Naive thymus-derived CD4-positive, alpha-beta T cell (primary cell): ENCODE measurements at regions of chr1 and their contacts with region 1.

Region 1: DNA sequence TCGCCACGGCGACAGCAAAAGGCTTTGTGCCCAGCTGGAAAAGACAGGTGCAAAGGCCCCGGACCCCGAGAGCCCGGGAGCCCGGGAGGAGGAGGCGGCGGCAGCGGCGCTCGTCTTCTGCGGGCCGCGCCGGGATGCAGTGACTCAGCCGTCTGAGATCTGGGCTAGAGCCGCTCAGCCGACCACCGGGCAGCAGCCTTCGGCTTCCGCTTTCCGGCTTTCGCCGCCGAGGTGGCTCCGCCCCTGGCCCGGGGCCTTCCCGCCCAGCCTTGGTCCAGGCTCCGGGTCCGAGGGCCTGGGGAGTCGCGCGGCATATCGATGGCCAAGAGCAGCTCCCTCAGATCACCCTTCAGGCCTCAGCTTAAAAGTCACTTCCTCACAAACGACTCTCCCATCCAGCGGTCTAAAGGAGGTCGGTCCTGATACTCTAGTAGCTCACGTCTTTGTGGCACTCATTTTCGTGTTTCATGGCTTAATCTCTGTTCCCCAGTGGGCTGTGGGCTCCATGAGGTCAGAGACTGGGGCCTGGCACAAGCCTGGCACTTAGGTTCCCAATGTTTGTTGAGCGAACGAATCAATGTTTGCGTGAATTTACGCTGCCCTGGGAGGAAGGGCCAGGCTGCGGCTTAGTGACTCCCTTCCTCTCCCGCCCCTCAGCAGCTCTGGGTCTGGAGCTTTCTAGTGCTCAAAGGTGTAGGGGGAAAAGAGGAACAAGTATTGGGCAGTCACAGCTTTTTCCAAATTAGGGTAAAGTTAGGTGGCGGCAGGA is at the start of gene PHTF1:
- DNase-seq: peak in 8 of 9 donors; percentile 14 to 74 (median 23)
- ATAC-seq: peak; percentile 88
- H3K4me3 ChIP-seq: peak within 1 kb of the TSS; percentile 81
- H3K4me3 Mint-ChIP-seq: peak within 1 kb of the TSS; percentile 91 to 97 (median 93)
- H3K27ac ChIP-seq: peak within 1 kb of the TSS; percentile 74
- H3K27ac Mint-ChIP-seq: peak within 1 kb of the TSS; percentile 87 to 96 (median 90)
- H3K4me1 ChIP-seq: peaks cover 0 to 16% of the 10 kb centered on the region in 2 donors
- H3K4me1 Mint-ChIP-seq: peaks cover 0 to 36% (median 24%) of the 10 kb centered on the region in 7 donors
- H3K27me3 ChIP-seq: no peaks in the 10 kb centered on the region
- H3K27me3 Mint-ChIP-seq: no peaks in the 10 kb centered on the region
- total RNA-seq, gene PHTF1: 2.5 to 21.0 (median 7.1) TPM

Region 2: GRCh38 chr1:113783254-113784099 is 24.0 kb after region 1 on chr1:
- CTCF ChIA-PET with region 1: interaction called, 5 read pairs
- POLR2A ChIA-PET with region 1: interaction called, 14 read pairs
- intact Hi-C with region 1: loop called (anchors 1 kb)
- DNase-seq: peak in 7 of 9 donors; percentile 57 to 74 (median 66)
- ATAC-seq: peak; percentile 98
- H3K4me3 ChIP-seq: peak overlapping the region; percentile 7
- H3K4me3 Mint-ChIP-seq: peak overlapping the region in 7 of 10 donors; percentile 5 to 80 (median 67)
- H3K27ac ChIP-seq: peak overlapping the region; percentile 61
- H3K27ac Mint-ChIP-seq: peak overlapping the region in 4 of 9 donors; percentile 60 to 97 (median 90)
- H3K4me1 ChIP-seq: peaks cover 52 to 62% of the 10 kb centered on the region in 2 donors
- H3K4me1 Mint-ChIP-seq: peaks cover 34 to 54% (median 42%) of the 10 kb centered on the region in 7 donors
- H3K27me3 ChIP-seq: no peaks in the 10 kb centered on the region
- H3K27me3 Mint-ChIP-seq: no peaks in the 10 kb centered on the region

Region 3: DNA sequence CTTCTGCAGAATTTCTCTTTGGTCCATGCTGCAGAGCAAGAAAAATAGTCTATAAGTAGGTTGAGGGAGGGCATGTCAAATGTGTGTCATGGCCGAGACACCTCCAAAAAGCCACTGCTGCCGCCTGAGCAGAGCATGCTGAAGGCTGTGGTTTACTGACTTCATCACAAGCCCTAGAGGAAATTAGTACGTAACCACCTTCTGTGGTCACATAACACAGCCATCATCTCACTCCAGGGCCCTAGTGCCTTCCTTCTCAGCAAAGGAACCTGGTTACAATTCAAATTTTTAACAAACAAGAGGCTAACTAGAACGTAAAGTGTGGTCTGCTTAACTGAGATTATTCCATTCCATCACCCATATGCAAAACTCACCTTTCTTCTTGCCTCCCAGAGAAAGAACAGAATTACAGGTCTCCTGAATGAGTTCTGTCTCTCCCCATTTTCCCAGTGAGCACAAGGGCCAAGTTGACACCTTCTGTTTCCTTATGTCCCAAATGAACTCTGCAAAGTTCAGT is 112.1 kb after region 1 on chr1 and contains the start of gene PTPN22:
- CTCF ChIA-PET with region 1: no interaction called
- POLR2A ChIA-PET with region 1: no interaction called
- intact Hi-C with region 1: loop called in 1 of 2 experiments (anchors 2 kb)
- DNase-seq: peak; percentile 41 to 91 (median 87)
- ATAC-seq: peak; percentile 98
- H3K4me3 ChIP-seq: peak within 1 kb of the TSS; percentile 81
- H3K4me3 Mint-ChIP-seq: peak within 1 kb of the TSS; percentile 82 to 95 (median 92)
- H3K27ac ChIP-seq: peak within 1 kb of the TSS; percentile 87
- H3K27ac Mint-ChIP-seq: peak within 1 kb of the TSS; percentile 94 to 99 (median 98)
- H3K4me1 ChIP-seq: peaks cover 30 to 65% of the 10 kb centered on the region in 2 donors
- H3K4me1 Mint-ChIP-seq: peaks cover 37 to 77% (median 72%) of the 10 kb centered on the region in 7 donors
- H3K27me3 ChIP-seq: no peaks in the 10 kb centered on the region
- H3K27me3 Mint-ChIP-seq: no peaks in the 10 kb centered on the region
- total RNA-seq, gene PTPN22: 22.2 to 76.7 (median 27.5) TPM

Region 4: DNA sequence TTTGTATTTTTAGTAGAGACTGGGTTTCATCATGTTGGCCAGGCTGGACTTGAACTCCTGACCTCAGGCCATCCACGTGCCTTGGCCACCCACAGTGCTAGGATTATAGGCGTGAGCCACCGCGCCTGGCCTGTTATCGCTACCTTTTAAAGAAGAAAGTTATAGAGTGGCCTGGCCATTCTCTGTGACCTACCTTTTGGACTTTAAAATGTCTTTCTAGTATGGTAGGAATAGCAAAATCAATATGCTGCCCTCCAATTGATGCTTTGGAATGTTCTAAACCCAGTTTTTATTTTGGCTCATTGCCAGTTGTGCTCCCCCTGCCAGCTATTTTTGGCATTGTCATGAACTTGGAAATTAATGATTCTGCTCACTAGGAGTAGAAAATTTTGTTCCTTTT is 189.5 kb after region 1 on chr1:
- CTCF ChIA-PET with region 1: no interaction called
- POLR2A ChIA-PET with region 1: no interaction called
- intact Hi-C with region 1: loop called in 1 of 2 experiments (anchors 5 kb)
- DNase-seq: peak in 5 of 9 donors; percentile 16 to 53 (median 41)
- ATAC-seq: no peak
- H3K4me3 ChIP-seq: no peak overlapping the region
- H3K4me3 Mint-ChIP-seq: peak overlapping the region in 9 of 10 donors; percentile 36 to 88 (median 72)
- H3K27ac ChIP-seq: peak overlapping the region; percentile 73
- H3K27ac Mint-ChIP-seq: peak overlapping the region in 8 of 9 donors; percentile 92 to 99 (median 97)
- H3K4me1 ChIP-seq: peaks cover 42 to 68% of the 10 kb centered on the region in 2 donors
- H3K4me1 Mint-ChIP-seq: peaks cover 33 to 95% (median 85%) of the 10 kb centered on the region in 7 donors
- H3K27me3 ChIP-seq: no peaks in the 10 kb centered on the region
- H3K27me3 Mint-ChIP-seq: no peaks in the 10 kb centered on the region